CD4-positive, alpha-beta memory T cell (primary cell): ENCODE measurements at regions of chr1 and their contacts with region 1.

Region 1: DNA sequence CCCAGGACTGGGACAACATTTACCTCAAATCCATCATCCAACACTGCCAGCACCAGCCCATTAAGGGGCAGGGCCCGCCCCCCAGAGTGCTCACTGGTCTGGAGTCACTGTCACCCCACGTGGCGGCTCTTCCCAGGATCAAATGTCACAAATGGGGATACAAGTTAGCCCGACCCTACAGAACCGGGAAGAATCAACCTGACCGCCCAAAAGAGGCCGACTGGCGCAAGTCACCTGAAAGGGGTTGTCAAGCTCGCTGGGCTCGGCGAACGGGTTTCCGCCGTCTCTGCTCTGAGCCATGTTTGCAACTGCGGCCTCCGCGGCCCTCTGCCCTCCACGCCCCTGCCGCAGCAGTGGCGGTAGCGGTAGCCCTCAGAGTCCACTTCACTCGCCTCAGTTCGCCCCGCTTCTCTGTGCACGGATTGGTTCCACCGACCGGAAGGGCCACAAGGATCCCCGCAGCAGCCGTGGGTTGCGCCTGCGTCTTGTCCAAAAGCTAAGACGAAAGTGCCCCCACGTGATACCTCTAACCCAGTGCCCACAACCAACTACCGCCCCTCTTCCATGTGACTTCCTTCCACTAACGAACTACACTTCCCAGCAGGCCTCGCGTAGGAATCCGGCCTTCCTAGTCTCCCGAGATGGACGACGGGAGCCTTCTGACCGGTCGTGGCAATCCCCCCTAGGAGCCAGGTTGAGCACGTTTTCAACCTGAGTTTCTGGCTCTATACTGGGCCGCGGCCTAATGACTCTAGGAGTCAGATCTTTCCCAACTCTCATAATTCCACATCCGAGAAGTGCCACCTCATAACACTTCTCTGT is at the start of gene SCAMP3:
- DNase-seq: peak; percentile 82 to 94 (median 84)
- H3K4me3 ChIP-seq: peak within 1 kb of the TSS; percentile 94
- H3K4me3 Mint-ChIP-seq: peak within 1 kb of the TSS; percentile 95 to 100 (median 99)
- H3K27ac ChIP-seq: peak within 1 kb of the TSS; percentile 86
- H3K27ac Mint-ChIP-seq: peak within 1 kb of the TSS; percentile 86 to 99 (median 97)
- H3K4me1 ChIP-seq: peaks cover 23% of the 10 kb centered on the region
- H3K4me1 Mint-ChIP-seq: peaks cover 12 to 40% (median 30%) of the 10 kb centered on the region in 4 donors
- H3K27me3 ChIP-seq: no peaks in the 10 kb centered on the region
- H3K27me3 Mint-ChIP-seq: no peaks in the 10 kb centered on the region
- total RNA-seq, gene SCAMP3: 94.4 to 101 TPM

Region 2: DNA sequence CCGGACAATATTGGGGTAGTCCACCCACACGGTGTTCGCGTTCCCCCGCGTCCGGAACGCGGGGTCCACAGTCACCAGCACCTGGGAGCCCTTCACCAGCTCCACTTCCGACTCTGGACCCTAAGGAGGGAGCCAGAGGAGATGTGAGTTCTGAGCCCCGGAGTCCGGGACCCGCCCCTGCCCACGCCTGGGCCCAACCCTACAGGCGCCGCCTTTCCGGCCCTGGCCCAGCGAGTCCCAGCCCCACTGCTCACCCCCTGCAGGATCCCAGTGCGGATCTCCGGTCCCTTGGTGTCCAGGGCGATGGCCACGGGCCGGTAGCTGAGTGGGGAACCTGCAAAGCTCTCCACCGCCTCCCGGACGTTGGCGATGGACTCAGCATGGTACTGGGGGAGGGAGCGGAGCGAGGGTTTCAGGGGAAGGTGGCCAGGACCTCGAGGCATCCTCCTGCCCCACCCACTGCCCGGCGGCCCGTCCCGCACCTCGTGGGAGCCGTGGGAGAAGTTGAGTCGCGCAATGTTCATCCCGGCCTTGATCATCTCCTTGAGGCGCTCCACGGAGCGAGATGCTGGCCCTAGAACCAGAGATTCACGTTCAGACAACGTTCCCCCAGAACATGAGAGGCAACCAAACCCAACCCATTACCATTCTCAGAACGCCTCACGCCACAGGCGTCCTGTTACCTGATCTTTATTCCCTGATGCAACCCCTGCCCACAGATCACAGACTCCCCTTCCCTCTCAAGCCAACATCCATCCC is 33.3 kb after region 1 on chr1:
- CTCF ChIA-PET with region 1: no interaction called
- POLR2A ChIA-PET with region 1: no interaction called
- intact Hi-C with region 1: no loop called
- DNase-seq: no peak
- H3K4me3 ChIP-seq: no peak overlapping the region
- H3K4me3 Mint-ChIP-seq: no peak overlapping the region
- H3K27ac ChIP-seq: no peak overlapping the region
- H3K27ac Mint-ChIP-seq: no peak overlapping the region
- H3K4me1 ChIP-seq: peaks cover 6% of the 10 kb centered on the region
- H3K4me1 Mint-ChIP-seq: peaks cover 0 to 8% (median 4%) of the 10 kb centered on the region in 4 donors
- H3K27me3 ChIP-seq: peaks cover 10% of the 10 kb centered on the region
- H3K27me3 Mint-ChIP-seq: peaks cover 21 to 32% of the 10 kb centered on the region in 2 donors

Region 3: DNA sequence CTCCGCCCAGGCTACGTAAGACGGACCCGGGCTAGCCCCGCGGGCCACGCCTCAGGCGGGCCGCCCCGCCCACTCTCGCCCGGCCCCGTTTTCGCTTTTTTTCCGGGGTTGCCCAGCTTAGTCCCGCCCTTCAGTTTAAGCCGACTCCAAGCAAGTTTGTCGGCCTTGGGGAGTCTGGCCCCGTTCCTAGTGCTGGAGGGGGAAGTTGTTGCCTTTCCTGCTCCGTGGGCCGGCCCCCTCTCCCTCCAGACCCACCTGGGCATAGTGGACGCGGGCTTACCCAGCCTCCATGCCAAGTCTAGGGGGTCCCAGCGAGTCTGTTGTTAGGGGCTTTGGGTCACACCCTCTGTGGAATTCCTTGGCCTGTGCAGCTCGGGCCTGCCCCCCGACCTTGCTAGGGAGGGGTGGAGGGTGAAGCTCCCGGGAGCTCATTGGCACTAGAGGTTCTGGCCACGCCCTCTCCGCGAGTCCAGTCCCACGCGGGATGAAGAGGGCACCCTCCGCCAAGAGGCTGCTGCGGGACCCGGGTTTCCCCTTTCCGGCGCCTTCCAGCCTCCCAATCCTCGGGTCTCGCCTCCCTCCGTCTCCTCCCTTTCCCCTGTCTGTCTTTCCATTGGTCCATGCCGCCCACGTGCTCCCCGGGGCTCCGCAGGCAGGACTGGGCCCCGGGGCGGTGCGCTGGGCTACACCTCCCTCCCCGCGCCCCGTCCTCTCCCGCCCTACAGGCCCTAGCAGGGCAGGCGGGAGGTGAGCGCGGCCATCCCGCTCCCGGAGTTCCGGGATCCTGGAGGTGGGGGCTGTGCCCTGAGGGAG is 61.9 kb after region 1 on chr1:
- CTCF ChIA-PET with region 1: interaction called, 5 read pairs
- POLR2A ChIA-PET with region 1: interaction called, 33 read pairs
- intact Hi-C with region 1: no loop called
- DNase-seq: peak; percentile 83 to 93 (median 85)
- H3K4me3 ChIP-seq: peak overlapping the region; percentile 91 to 96
- H3K4me3 Mint-ChIP-seq: peak overlapping the region; percentile 70 to 91 (median 88)
- H3K27ac ChIP-seq: peak overlapping the region; percentile 96
- H3K27ac Mint-ChIP-seq: peak overlapping the region; percentile 82 to 93 (median 90)
- H3K4me1 ChIP-seq: peaks cover 31% of the 10 kb centered on the region
- H3K4me1 Mint-ChIP-seq: peaks cover 14 to 46% (median 29%) of the 10 kb centered on the region in 4 donors
- H3K27me3 ChIP-seq: no peaks in the 10 kb centered on the region
- H3K27me3 Mint-ChIP-seq: no peaks in the 10 kb centered on the region